HCT116 (cell line): ENCODE measurements at regions of chr2 and their contacts with region 1.

Region 1: DNA sequence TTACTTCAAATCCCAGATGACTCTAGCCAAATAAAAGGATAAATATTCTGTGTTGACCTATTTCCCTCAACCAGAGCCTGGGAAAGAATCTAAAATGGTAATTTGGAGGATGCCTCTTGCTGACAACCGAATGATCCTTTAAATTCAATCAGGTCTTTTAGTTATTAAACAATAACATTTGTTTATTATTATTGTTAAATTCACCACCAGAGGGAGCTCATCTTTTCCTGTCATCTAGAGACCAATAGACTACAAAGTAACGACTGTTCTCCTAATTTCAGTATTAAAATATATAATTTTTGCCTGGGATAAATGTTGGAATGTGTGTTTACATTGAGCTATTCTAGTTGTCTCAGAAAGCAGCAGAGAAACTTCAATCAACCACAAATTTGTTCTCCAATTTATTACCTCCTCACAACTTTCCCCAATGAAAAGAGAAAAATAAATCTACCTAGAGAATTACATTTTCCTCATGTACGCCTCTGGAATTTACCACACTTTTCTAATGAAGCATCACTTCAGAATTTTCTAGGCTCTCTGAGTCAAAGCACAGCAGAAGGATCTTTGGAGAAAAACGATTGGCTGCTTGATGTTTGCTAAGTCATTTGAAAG is 142.7 kb downstream of the SCG2 start:
- DNase-seq: peak; percentile 27
- ATAC-seq: peak; percentile 30; the same call in 1 of the 2 replicates
- H3K4me3 ChIP-seq: no peak overlapping the region
- H3K27ac ChIP-seq: peak overlapping the region; percentile 58; the same call in 1 of the 2 replicates
- H3K4me1 ChIP-seq: peaks cover 19 to 31% of the 10 kb centered on the region in 2 experiments
- H3K27me3 ChIP-seq: no peaks in the 10 kb centered on the region
- CTCF ChIP-seq: peak; percentile 30 to 54 (median 51); a peak in 4 of 6 replicates
- POLR2A ChIP-seq: no peak
- RAD21 ChIP-seq: peak; percentile 69

Region 2: GRCh38 chr2:222969491-222969890 is 489.9 kb before region 1 on chr2:
- CTCF ChIA-PET with region 1: interaction called, 3 read pairs
- POLR2A ChIA-PET with region 1: no interaction called
- RAD21 ChIA-PET with region 1: no interaction called
- intact Hi-C with region 1: loop called (anchors 2 kb)
- DNase-seq: no peak
- ATAC-seq: no peak
- H3K4me3 ChIP-seq: no peak overlapping the region
- H3K27ac ChIP-seq: no peak overlapping the region
- H3K4me1 ChIP-seq: peaks cover 6 to 26% of the 10 kb centered on the region in 2 experiments; a peak in 2 of 4 replicates
- H3K27me3 ChIP-seq: no peaks in the 10 kb centered on the region
- CTCF ChIP-seq: no peak
- POLR2A ChIP-seq: no peak
- RAD21 ChIP-seq: no peak

Region 3: GRCh38 chr2:223549215-223549614 is 89.8 kb after region 1 on chr2:
- CTCF ChIA-PET with region 1: interaction called, 3 read pairs
- POLR2A ChIA-PET with region 1: no interaction called
- RAD21 ChIA-PET with region 1: no interaction called
- intact Hi-C with region 1: loop called (anchors 5 kb)
- DNase-seq: peak; percentile 99
- ATAC-seq: peak; percentile 87
- H3K4me3 ChIP-seq: peak overlapping the region in 1 of 2 experiments; percentile 21; a peak in 2 of 4 replicates
- H3K27ac ChIP-seq: peak overlapping the region; percentile 98
- H3K4me1 ChIP-seq: peaks cover 56 to 78% of the 10 kb centered on the region in 2 experiments
- H3K27me3 ChIP-seq: no peaks in the 10 kb centered on the region
- CTCF ChIP-seq: no peak
- POLR2A ChIP-seq: no peak
- RAD21 ChIP-seq: peak; percentile 61

Region 4: DNA sequence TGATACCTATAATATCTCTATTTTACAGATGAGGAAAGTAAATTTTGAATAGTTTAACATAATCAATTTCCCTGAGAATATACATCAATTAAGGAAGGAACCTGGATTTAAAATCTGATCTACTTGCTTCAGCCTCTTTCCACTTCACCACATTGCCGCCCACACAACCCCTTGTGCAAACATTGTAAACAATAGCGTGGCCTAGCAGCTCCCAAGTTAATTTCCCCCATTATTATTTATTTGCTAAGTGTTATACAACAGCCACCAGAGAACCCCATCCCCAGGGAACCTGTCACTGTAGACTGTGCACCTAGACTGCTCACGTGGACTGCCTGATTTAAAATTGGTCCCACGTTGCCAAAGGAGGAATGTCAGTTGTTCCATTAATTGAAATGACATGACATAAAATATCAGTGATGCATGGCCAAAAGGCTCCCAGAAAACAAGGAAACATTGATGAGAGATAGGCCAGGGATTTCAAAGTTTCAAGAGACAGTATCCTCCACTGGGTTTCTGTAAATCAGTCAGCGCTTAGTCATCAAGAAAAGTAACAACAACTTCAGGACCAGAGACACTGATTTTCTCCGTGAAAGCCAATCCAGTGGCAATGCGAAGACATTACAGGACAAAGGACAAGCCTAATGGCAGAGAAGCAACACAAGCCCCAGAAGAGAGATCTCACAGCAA is 101.5 kb after region 1 on chr2:
- CTCF ChIA-PET with region 1: no interaction called
- POLR2A ChIA-PET with region 1: no interaction called
- RAD21 ChIA-PET with region 1: no interaction called
- intact Hi-C with region 1: loop called (anchors 1 kb)
- DNase-seq: peak; percentile 88
- ATAC-seq: peak; percentile 56
- H3K4me3 ChIP-seq: peak overlapping the region in 1 of 2 experiments; percentile 24; a peak in 1 of 4 replicates
- H3K27ac ChIP-seq: peak overlapping the region; percentile 98
- H3K4me1 ChIP-seq: peaks cover 85 to 99% of the 10 kb centered on the region in 2 experiments
- H3K27me3 ChIP-seq: no peaks in the 10 kb centered on the region
- CTCF ChIP-seq: peak in 2 of 3 experiments; percentile 16 to 24; a peak in 3 of 6 replicates
- POLR2A ChIP-seq: no peak
- RAD21 ChIP-seq: peak; percentile 43

Region 5: GRCh38 chr2:223669453-223670225 is 210.2 kb after region 1 on chr2:
- CTCF ChIA-PET with region 1: interaction called, 3 read pairs
- POLR2A ChIA-PET with region 1: no interaction called
- RAD21 ChIA-PET with region 1: no interaction called
- intact Hi-C with region 1: loop called (anchors 10 kb)
- DNase-seq: no peak
- ATAC-seq: peak; percentile 29; the same call in 1 of the 2 replicates
- H3K4me3 ChIP-seq: no peak overlapping the region
- H3K27ac ChIP-seq: no peak overlapping the region
- H3K4me1 ChIP-seq: peaks cover 19 to 41% of the 10 kb centered on the region in 2 experiments
- H3K27me3 ChIP-seq: no peaks in the 10 kb centered on the region
- CTCF ChIP-seq: no peak
- POLR2A ChIP-seq: no peak
- RAD21 ChIP-seq: no peak

Region 6: DNA sequence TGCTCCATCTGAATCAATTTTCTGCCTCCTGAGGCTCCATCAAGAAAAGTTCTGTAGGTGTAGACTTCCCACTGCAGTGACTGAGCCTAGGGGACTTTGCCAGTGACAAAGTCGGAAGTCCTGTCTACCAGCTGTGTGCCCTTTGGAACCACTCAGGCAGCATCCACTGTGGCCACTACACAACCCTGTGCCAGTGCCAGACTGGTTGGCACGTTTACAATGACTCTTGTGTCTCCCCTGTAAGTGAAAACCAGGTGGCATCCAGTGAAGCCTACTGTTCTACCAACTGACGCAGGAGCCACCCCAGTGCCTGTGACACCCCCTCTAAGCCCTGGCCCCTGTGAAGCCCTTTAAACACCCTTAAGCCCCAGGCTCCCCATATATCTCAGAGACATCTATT is 711.8 kb after region 1 on chr2:
- CTCF ChIA-PET with region 1: no interaction called
- POLR2A ChIA-PET with region 1: no interaction called
- RAD21 ChIA-PET with region 1: no interaction called
- intact Hi-C with region 1: no loop called
- DNase-seq: no peak
- ATAC-seq: no peak
- H3K4me3 ChIP-seq: no peak overlapping the region
- H3K27ac ChIP-seq: no peak overlapping the region
- H3K4me1 ChIP-seq: no peaks in the 10 kb centered on the region
- H3K27me3 ChIP-seq: no peaks in the 10 kb centered on the region
- CTCF ChIP-seq: no peak
- POLR2A ChIP-seq: no peak
- RAD21 ChIP-seq: no peak